ENCODE measurements at regions of chr20 and their contacts with region 1.

Region 1: DNA sequence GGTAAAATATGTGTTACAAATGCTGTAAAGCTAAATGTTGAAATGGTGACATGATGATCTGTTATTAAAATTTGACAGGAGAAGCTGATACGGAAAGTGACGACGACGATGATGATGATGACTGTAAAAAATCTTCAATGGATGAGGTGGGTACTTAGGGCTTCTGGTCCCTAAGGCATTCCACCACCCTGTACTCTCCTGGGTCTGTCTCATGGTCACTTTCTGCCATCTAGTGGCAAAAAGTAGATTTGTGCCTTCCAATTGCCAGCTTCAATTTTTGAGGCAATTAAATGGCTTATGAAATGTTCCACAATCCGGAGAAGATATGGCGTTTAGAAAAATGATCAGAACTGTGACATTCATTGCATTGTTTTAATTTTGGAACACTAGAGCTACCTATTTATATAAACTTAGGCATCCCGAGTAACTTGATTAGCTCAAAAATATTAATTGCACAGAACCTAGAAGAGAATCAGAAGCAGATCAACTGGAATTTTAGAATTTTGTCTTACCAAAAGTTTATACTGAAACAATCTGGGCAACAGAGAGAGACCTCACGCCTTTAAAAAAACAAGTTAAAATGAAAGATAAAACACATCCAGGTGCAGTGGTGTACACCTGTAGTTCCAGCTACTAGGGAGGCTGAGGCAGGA is 346.5 kb upstream of the PLCB4 start:
- DNase-seq: peak; percentile 52
- H3K4me3 ChIP-seq: no peak overlapping the region
- H3K27ac ChIP-seq: no peak overlapping the region
- H3K4me1 ChIP-seq: peaks cover 0 to 9% of the 10 kb centered on the region in 2 experiments; a peak in 1 of 4 replicates
- H3K27me3 ChIP-seq: no peaks in the 10 kb centered on the region
- CTCF ChIP-seq: peak; percentile 86
- EP300 ChIP-seq: no peak
- RAD21 ChIP-seq: peak; percentile 96

Region 2: GRCh38 chr20:7935027-7935551 is 787.3 kb before region 1 on chr20:
- CTCF ChIA-PET with region 1: interaction called, 140 read pairs
- POLR2A ChIA-PET with region 1: interaction called, 5 read pairs
- DNase-seq: no peak
- H3K4me3 ChIP-seq: no peak overlapping the region
- H3K27ac ChIP-seq: no peak overlapping the region
- H3K4me1 ChIP-seq: peaks cover 0 to 4% of the 10 kb centered on the region in 2 experiments; a peak in 2 of 4 replicates
- H3K27me3 ChIP-seq: 0 out of 2 replicates have a peak, but pooled peaks cover 9% of the 10 kb centered on the region
- CTCF ChIP-seq: no peak
- EP300 ChIP-seq: no peak
- RAD21 ChIP-seq: no peak

Region 3: GRCh38 chr20:8019246-8019997 is 703.0 kb before region 1 on chr20 and contains the start of gene TMX4:
- CTCF ChIA-PET with region 1: interaction called, 27 read pairs
- POLR2A ChIA-PET with region 1: no interaction called
- DNase-seq: peak; percentile 96
- H3K4me3 ChIP-seq: peak within 1 kb of the TSS; percentile 82 to 93
- H3K27ac ChIP-seq: peak within 1 kb of the TSS; percentile 84 to 98
- H3K4me1 ChIP-seq: peaks cover 16 to 18% of the 10 kb centered on the region in 2 experiments; a peak in 3 of 4 replicates
- H3K27me3 ChIP-seq: no peaks in the 10 kb centered on the region
- CTCF ChIP-seq: peak; percentile 52
- EP300 ChIP-seq: peak; percentile 5 to 77; a peak in 2 of 4 replicates
- RAD21 ChIP-seq: peak; percentile 18; the same call in 1 of the 2 replicates
- polyA plus RNA-seq, gene TMX4: 10.9 and 14.6 TPM in 2 replicates

Region 4: DNA sequence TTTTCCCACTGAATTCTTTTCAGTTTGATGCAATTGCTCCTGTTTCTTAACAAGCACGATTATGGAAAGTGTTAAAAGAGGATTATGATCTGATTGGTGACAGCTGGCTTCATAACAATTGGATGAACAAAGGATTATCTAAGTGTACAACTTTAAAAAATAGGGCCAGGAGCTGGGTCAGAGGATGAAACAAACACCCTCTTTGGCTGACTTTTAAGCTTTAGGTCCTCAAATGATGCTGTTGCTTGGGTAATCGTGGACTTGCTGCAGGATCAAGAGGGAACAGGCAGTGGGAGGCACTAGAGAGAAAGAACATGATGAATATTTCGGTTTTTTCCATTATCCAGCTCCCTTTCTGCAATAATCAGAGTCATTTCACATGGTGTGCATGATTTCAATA is 667.3 kb before region 1 on chr20:
- CTCF ChIA-PET with region 1: interaction called, 35 read pairs
- POLR2A ChIA-PET with region 1: no interaction called
- DNase-seq: no peak
- H3K4me3 ChIP-seq: no peak overlapping the region
- H3K27ac ChIP-seq: no peak overlapping the region
- H3K4me1 ChIP-seq: no peaks in the 10 kb centered on the region
- H3K27me3 ChIP-seq: no peaks in the 10 kb centered on the region
- CTCF ChIP-seq: no peak
- EP300 ChIP-seq: no peak
- RAD21 ChIP-seq: no peak

Region 5: DNA sequence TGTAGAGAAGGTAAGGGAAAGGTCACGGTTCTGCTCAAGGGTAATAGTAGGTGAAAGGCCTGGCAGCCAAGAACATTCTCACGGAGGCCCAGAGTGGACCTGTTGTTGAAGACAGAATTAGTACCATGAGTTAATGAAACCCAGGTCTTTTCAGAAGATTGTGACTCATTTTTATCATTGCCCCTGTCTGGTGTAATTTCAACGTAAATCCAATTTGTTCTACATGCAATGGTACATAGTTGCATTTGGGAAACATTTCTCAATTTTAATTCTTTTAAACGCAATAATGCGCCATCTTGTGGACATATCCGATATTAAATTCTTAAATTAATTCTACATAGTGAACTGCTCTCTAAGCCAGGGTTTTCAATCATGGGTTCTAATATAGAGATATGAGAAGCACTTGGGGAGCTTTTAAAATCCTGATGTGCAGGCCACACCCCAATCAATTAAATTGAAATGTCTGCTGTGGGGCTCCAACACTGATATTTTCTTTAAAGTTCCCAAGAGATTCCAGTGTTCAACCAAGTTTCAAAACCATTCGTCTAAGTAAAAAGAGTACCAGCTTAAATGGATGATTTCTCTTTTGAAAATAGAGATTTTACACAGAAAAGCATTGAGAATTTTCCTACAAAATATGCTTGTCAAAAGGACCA is 332.9 kb before region 1 on chr20:
- CTCF ChIA-PET with region 1: interaction called, 60 read pairs
- POLR2A ChIA-PET with region 1: no interaction called
- DNase-seq: peak; percentile 27
- H3K4me3 ChIP-seq: no peak overlapping the region; a peak in 1 of 4 replicates
- H3K27ac ChIP-seq: peak overlapping the region; percentile 58 to 88
- H3K4me1 ChIP-seq: peaks cover 14 to 22% of the 10 kb centered on the region in 2 experiments; a peak in 3 of 4 replicates
- H3K27me3 ChIP-seq: no peaks in the 10 kb centered on the region
- CTCF ChIP-seq: peak; percentile 70
- EP300 ChIP-seq: 0 out of 4 replicates have a peak, but pooled peaks of 1 of the 2 experiments have one; percentile 14
- RAD21 ChIP-seq: peak; percentile 64

Region 6: DNA sequence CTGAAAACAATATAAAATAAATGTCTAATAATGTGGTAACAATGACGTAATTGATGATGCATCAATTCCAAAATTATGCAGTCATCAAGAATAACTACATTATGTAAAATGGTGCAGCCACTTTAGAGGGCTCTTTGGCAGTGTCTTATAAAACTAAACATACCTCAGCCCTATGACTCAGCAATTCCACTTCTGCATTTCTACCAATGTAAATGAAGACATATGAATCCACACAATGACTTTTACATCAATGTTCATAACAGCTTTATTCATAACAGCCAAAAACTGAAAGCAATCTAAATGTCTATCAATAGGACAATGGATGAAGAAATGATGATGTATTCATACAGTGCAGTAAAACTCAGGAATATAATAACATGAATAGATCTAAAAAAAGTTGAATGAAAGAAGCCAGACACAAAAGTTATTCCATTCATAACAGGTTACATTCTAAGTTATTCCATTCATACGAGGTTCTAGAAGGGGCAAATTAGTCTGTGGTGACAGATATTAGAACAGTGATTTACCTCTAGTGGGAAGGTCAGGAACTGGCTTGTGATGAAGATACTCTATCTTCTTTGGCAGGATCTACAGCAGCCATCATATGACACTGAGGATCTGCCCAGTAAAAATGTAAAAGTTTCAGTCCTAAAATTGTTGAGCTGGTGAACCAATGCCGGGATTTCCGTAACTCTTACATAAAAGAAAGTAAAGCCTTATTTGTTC is 194.2 kb before region 1 on chr20:
- CTCF ChIA-PET with region 1: interaction called, 14 read pairs
- POLR2A ChIA-PET with region 1: no interaction called
- DNase-seq: no peak
- H3K4me3 ChIP-seq: no peak overlapping the region
- H3K27ac ChIP-seq: peak overlapping the region; percentile 53 to 85
- H3K4me1 ChIP-seq: peaks cover 5 to 6% of the 10 kb centered on the region in 2 experiments; a peak in 3 of 4 replicates
- H3K27me3 ChIP-seq: no peaks in the 10 kb centered on the region
- CTCF ChIP-seq: no peak
- EP300 ChIP-seq: peak in 1 of 2 experiments; percentile 69; a peak in 1 of 4 replicates
- RAD21 ChIP-seq: no peak

Region 7: GRCh38 chr20:8709627-8710026 is 12.8 kb before region 1 on chr20:
- CTCF ChIA-PET with region 1: interaction called, 37 read pairs
- POLR2A ChIA-PET with region 1: no interaction called
- DNase-seq: no peak
- H3K4me3 ChIP-seq: no peak overlapping the region
- H3K27ac ChIP-seq: no peak overlapping the region
- H3K4me1 ChIP-seq: no peaks in the 10 kb centered on the region
- H3K27me3 ChIP-seq: no peaks in the 10 kb centered on the region
- CTCF ChIP-seq: no peak
- EP300 ChIP-seq: no peak
- RAD21 ChIP-seq: no peak